ENCODE measurements at regions of chr7 and their contacts with region 1.

Region 1: DNA sequence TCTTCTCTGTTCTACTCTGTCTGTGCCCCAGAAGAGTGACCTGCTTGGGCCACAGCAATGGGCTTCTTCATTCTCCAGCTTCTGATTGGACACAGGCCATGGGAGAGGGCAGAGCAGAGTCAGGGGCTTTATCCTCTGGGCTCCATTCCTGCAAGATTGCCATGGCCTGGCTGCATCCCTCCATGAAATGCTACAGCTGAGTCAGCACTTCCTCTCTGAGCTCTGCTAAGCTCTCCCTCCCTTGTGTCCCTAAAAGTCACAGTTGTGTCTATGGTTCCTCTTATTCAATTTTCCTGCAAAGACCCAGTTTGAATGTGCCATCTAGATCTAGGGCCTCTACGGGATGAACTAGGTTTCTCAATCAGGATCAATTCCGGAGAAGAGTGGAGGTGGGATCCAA is 903.8 kb downstream of the TYW1 start:
- DNase-seq: no peak
- H3K4me3 ChIP-seq: no peak overlapping the region
- H3K27ac ChIP-seq: no peak overlapping the region
- H3K4me1 ChIP-seq: no peaks in the 10 kb centered on the region
- H3K27me3 ChIP-seq: peaks cover 15% of the 10 kb centered on the region
- CTCF ChIP-seq: no peak

Region 2: DNA sequence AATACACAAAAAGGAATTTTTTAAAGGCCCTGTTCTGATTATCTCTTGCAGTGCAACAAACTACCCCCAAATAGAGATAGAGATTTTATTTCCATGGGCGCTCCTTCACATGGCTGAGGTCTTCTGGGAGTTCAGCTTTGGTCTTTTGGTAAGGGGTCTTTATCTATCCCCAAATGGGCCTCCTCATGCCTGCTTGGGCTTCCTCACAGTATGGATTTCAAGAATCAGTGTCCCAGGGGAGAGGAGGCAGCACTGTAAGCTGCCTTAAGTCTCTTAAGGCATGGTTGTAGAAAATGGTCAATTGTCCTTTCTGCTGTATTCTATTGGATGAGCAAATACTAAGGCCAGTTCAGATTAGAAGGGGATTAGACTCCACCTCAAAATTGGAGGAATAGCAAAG is 62.4 kb after region 1 on chr7:
- CTCF ChIA-PET with region 1: no interaction called
- POLR2A ChIA-PET with region 1: no interaction called
- intact Hi-C with region 1: no loop called
- DNase-seq: no peak
- H3K4me3 ChIP-seq: no peak overlapping the region
- H3K27ac ChIP-seq: no peak overlapping the region
- H3K4me1 ChIP-seq: no peaks in the 10 kb centered on the region
- H3K27me3 ChIP-seq: peaks cover 12% of the 10 kb centered on the region; the same call in 1 of the 2 replicates
- CTCF ChIP-seq: no peak

Region 3: GRCh38 chr7:68015978-68016532 is 115.6 kb after region 1 on chr7:
- CTCF ChIA-PET with region 1: no interaction called
- POLR2A ChIA-PET with region 1: no interaction called
- intact Hi-C with region 1: no loop called
- DNase-seq: no peak
- H3K4me3 ChIP-seq: no peak overlapping the region
- H3K27ac ChIP-seq: no peak overlapping the region
- H3K4me1 ChIP-seq: no peaks in the 10 kb centered on the region
- H3K27me3 ChIP-seq: no peaks in the 10 kb centered on the region; the same call in 1 of the 2 replicates
- CTCF ChIP-seq: no peak

Region 4: DNA sequence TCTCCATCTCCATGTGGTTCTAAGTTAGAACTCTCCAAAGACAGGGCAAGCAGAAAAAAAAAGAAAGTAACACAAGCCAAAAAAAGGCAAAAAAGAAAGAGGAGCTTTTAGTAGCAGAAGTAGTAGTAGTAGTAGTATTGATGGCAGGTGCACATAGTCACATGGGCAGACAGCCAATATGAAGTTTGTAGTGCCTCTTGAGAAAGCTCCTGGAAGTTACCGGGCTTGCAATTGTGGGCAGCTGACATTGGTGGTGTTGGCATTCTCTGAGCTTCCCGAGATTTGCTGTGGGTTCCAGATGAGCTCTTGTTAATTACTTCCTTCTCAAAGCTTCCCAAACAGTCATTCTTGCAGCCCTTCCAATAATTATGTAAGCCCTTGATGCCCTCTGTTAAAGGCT is 224.7 kb after region 1 on chr7:
- CTCF ChIA-PET with region 1: no interaction called
- POLR2A ChIA-PET with region 1: no interaction called
- intact Hi-C with region 1: no loop called
- DNase-seq: no peak
- H3K4me3 ChIP-seq: no peak overlapping the region
- H3K27ac ChIP-seq: no peak overlapping the region
- H3K4me1 ChIP-seq: no peaks in the 10 kb centered on the region
- H3K27me3 ChIP-seq: no peaks in the 10 kb centered on the region
- CTCF ChIP-seq: no peak

Region 5: DNA sequence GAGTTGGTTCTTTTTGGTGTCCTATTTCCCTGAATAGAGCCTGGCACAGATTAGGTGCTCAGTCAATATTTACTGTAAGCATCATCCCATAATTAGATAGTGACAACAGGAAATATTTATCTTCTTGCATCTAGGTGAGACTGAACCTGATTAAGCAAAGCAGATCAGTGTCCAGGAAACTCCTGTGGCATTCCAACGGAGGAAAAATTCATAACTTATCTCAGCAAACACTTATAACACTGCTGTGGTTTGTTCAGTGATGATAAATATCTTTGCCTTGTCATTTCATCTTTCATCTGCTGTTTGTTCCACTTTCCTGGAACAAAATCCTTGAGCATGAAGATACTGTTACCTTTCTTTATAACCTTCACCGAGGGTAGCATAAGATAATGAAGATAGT is 537.6 kb after region 1 on chr7:
- CTCF ChIA-PET with region 1: interaction called, 14 read pairs
- POLR2A ChIA-PET with region 1: no interaction called
- intact Hi-C with region 1: no loop called
- DNase-seq: peak in 1 of 2 experiments; percentile 76
- H3K4me3 ChIP-seq: no peak overlapping the region
- H3K27ac ChIP-seq: no peak overlapping the region
- H3K4me1 ChIP-seq: peaks cover 10% of the 10 kb centered on the region; the same call in 1 of the 2 replicates
- H3K27me3 ChIP-seq: no peaks in the 10 kb centered on the region
- CTCF ChIP-seq: no peak

Region 6: GRCh38 chr7:69598081-69598486 is 1697.6 kb after region 1 on chr7 and contains the start of gene AUTS2:
- CTCF ChIA-PET with region 1: no interaction called
- POLR2A ChIA-PET with region 1: no interaction called
- intact Hi-C with region 1: no loop called
- DNase-seq: no peak
- H3K4me3 ChIP-seq: peak within 1 kb of the TSS; percentile 52; the same call in 1 of the 2 replicates
- H3K27ac ChIP-seq: no peak within 1 kb of the TSS
- H3K4me1 ChIP-seq: no peaks in the 10 kb centered on the region
- H3K27me3 ChIP-seq: no peaks in the 10 kb centered on the region; the same call in 1 of the 2 replicates
- CTCF ChIP-seq: no peak
- total RNA-seq, gene AUTS2: not detected in 2 replicates

Measured in PC-9 (cell line).